Esophagus muscularis mucosa (tissue), 4 donors: ENCODE measurements at regions of chr4 and their contacts with region 1.

Region 1: GRCh38 chr4:164926301-164926700 is 49.3 kb downstream of the APELA start:
- DNase-seq: no peak
- H3K4me3 ChIP-seq: no peak overlapping the region
- H3K27ac ChIP-seq: no peak overlapping the region
- H3K4me1 ChIP-seq: peaks cover 0 to 5% (median 0%) of the 10 kb centered on the region in 4 donors
- H3K27me3 ChIP-seq: no peaks in the 10 kb centered on the region
- CTCF ChIP-seq: no peak
- EP300 ChIP-seq: no peak
- POLR2A ChIP-seq: no peak

Region 2: DNA sequence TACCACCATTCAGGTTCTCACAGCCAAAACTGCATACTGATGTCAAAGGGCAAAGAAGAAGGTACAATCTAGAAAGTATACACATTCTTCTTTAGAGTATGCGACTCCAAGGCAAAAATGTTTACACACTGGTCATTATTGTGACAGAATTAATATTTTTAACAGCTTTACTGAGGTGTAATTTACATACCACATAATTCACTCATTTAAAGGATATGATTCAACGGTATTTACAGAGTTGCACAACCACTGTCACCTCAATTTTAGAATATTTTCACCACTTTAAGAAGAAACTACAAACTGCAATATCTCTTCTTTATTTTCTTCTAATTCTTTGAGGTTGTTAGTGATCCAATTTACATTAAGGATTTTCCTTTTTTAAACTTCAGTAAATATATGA is 497.7 kb before region 1 on chr4:
- intact Hi-C with region 1: no loop called
- DNase-seq: no peak
- H3K4me3 ChIP-seq: no peak overlapping the region
- H3K27ac ChIP-seq: no peak overlapping the region
- H3K4me1 ChIP-seq: no peaks in the 10 kb centered on the region
- H3K27me3 ChIP-seq: no peaks in the 10 kb centered on the region
- CTCF ChIP-seq: no peak
- EP300 ChIP-seq: no peak
- POLR2A ChIP-seq: no peak

Region 3: GRCh38 chr4:164874789-164875188 is 51.5 kb before region 1 on chr4:
- intact Hi-C with region 1: loop called (anchors 2 kb)
- DNase-seq: no peak
- H3K4me3 ChIP-seq: no peak overlapping the region
- H3K27ac ChIP-seq: no peak overlapping the region
- H3K4me1 ChIP-seq: no peaks in the 10 kb centered on the region
- H3K27me3 ChIP-seq: no peaks in the 10 kb centered on the region
- CTCF ChIP-seq: no peak
- EP300 ChIP-seq: no peak
- POLR2A ChIP-seq: no peak